ENCODE measurements at regions of chr9 and their contacts with region 1.

Region 1: DNA sequence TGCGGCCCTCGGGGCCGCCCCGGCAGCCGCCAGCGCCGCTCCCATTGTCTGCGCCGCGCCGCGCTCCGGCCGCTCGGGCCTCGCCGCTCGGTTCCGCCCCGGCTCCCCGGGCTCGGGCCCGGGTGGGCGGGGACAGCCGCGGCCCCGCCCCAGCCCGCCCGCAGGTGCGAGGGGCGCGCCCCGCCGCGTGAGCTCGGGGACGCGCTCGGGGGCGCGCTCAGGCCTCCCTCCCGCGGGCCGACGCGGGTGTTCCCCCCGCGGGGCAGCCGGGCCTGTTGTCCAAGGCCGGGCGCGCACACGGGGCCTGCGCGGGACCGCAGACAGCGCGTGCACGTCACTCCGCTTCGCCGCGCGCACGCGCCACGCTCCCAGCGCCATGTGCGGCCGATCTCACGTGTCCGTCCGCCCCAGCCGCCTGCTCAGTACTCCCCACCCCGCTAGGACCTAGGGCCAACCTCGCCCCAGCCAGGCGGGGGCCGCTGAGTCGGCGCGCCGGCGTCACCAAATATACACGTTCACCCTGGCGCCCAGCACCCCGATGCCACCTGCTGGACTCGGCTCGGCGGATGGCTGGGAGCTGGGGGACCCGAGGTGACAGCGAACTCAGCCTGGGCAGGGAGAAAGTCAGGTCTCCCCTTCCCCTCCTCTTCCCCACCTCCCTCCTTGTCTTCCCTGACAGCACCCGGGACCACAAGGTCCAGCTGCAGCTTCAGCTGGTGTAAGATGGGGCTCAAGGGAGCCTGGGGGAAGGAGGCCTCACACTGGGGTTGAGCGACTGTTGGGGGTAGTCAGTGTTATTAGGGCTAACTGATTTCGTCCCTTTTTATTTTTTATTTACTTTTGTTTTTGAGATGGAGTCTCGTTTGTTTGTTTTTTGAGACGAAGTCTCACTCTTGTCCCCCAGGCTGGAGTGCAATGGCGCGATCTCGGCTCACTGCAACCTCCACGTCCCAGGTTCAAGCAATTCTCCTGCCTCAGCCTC is 14.3 kb downstream of the GBGT1 start:
- DNase-seq: peak; percentile 85
- ATAC-seq: peak; percentile 54
- H3K4me3 Mint-ChIP-seq: peak overlapping the region; percentile 61
- H3K27ac Mint-ChIP-seq: no peak overlapping the region
- H3K4me1 Mint-ChIP-seq: peaks cover 18% of the 10 kb centered on the region
- H3K27me3 Mint-ChIP-seq: peaks cover 10% of the 10 kb centered on the region
- CTCF ChIP-seq: no peak

Region 2: DNA sequence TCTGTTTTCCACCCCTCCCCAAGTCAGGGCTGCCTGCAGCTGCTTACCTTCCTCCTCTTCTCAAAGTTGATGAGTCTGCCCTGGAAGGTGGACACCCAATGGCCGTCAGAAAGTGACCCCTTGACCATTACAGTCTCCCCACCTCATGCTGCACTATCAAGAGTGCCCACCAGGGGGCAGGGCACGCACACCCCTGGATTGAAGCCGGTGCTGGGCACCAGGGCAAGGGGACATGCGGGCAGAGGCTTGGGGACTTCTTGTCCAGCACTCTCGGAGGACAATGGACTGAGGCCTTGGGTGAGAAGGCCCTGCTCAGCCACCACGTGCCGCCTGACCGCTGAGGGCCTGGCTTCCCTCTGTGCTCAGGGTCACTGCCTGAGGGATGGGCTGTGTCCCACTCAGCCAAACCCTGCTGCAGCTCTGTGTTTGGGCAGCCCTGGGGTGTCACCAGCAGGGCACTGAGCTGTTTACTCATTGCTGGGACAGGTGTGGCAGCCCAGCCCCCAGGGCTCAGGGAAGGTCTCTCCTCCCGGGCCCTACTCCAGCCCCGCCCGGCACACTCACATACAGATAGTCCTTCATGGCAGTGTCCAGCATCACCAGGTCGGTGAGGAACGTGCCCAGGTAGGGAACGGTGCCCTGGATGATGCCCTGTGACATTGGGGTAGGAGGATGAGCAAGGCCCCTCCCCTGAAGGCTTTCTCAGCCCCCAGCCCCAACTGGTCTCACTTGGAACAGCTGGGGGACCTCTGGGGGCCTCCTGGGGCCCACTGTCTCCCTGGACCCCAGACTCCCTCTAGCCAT is 46.0 kb before region 1 on chr9:
- CTCF ChIA-PET with region 1: interaction called, 93 read pairs
- POLR2A ChIA-PET with region 1: interaction called, 3 read pairs
- DNase-seq: peak; percentile 78
- ATAC-seq: peak; percentile 58
- H3K4me3 Mint-ChIP-seq: no peak overlapping the region
- H3K27ac Mint-ChIP-seq: no peak overlapping the region
- H3K4me1 Mint-ChIP-seq: peaks cover 3% of the 10 kb centered on the region
- H3K27me3 Mint-ChIP-seq: no peaks in the 10 kb centered on the region
- CTCF ChIP-seq: peak; percentile 99

Region 3: GRCh38 chr9:133115448-133116345 is 33.7 kb before region 1 on chr9:
- CTCF ChIA-PET with region 1: interaction called, 93 read pairs
- POLR2A ChIA-PET with region 1: interaction called, 3 read pairs
- DNase-seq: no peak
- ATAC-seq: no peak
- H3K4me3 Mint-ChIP-seq: no peak overlapping the region
- H3K27ac Mint-ChIP-seq: no peak overlapping the region
- H3K4me1 Mint-ChIP-seq: peaks cover 9% of the 10 kb centered on the region
- H3K27me3 Mint-ChIP-seq: peaks cover 31% of the 10 kb centered on the region
- CTCF ChIP-seq: no peak

Region 4: GRCh38 chr9:133133681-133134418 is 15.6 kb before region 1 on chr9:
- CTCF ChIA-PET with region 1: interaction called, 57 read pairs
- POLR2A ChIA-PET with region 1: interaction called, 3 read pairs
- DNase-seq: peak; percentile 37
- ATAC-seq: peak; percentile 54
- H3K4me3 Mint-ChIP-seq: no peak overlapping the region
- H3K27ac Mint-ChIP-seq: peak overlapping the region; percentile 78
- H3K4me1 Mint-ChIP-seq: peaks cover 7% of the 10 kb centered on the region; the same call in 1 of the 2 replicates
- H3K27me3 Mint-ChIP-seq: no peaks in the 10 kb centered on the region; the same call in 1 of the 2 replicates
- CTCF ChIP-seq: no peak

Region 5: DNA sequence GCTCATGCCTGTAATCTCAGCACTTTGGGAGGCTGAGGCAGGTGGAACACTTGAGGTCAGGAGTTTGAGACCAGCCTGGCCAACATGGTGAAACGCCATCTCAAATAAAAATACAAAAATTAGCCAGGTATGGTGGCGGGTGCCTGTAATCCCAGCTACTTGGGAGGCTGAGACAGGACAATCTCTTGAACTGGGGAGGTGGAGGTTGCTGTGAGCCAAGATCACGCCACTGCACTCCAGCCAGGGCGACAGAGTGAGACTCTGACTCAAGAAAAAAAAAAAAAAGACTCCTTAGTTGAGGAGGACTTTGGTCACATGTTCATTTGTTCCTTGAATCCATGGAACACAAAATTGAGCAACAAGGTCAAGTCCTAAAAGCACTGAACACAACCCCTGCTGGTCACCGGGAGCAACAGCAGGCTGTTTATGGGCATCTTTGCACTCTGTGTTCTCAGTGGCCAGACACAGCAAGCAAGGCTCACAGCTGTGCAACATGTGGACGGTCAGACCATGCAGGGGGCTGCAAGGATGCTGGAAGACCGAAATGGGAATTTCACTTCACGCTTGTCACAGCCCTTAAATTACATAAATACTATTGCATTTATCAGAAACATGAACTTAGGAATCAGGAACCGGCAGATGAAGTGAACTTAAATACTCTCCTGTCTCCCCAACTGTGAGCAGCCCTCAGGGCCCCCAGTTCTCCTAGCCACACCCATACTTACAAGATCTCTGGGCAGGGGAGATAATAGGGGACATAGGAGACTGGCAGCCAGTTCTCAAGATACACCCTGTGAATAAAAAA is 11.5 kb after region 1 on chr9:
- CTCF ChIA-PET with region 1: interaction called, 16 read pairs
- POLR2A ChIA-PET with region 1: interaction called, 3 read pairs
- DNase-seq: peak; percentile 51
- ATAC-seq: peak; percentile 41
- H3K4me3 Mint-ChIP-seq: no peak overlapping the region
- H3K27ac Mint-ChIP-seq: no peak overlapping the region
- H3K4me1 Mint-ChIP-seq: peaks cover 6% of the 10 kb centered on the region
- H3K27me3 Mint-ChIP-seq: peaks cover 6% of the 10 kb centered on the region
- CTCF ChIP-seq: peak; percentile 74

Measured in WTC11 (cell line).